ENCODE measurements at regions of chr9 and their contacts with region 1.

Region 1: DNA sequence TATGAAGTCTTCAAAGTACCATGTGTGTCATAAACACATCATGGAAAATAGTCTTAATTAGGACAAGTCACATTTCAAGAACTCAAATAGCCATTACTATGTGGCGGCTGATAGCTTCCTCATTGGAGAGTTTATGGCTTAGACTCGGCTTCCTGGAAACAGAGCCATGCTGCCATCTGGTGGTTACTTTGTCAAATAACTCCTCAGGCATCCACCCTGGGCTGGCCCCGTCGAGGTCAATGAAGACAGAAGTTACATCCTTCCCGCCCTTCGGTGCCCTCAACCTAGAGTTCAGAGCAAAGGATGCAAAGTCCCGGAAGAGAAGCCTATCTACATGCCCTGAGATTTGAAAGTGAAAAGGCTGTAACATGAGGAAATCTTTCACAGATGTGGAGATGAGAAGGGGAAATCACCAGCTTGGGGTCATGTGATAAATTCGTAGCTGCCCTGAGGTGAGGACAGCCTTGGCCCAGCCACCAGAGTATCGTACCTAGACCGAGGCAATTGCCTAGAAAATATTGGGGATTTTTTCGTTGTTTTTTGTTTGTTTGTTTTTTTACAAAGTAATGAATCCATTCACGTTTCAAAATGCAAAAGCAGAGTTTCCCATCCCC is 45.5 kb upstream of the ZNF169 start:
- DNase-seq: peak; percentile 84
- ATAC-seq: peak; percentile 97
- H3K4me3 Mint-ChIP-seq: peak overlapping the region; percentile 11
- H3K27ac Mint-ChIP-seq: no peak overlapping the region
- H3K4me1 Mint-ChIP-seq: peaks cover 4% of the 10 kb centered on the region
- H3K27me3 Mint-ChIP-seq: peaks cover 29% of the 10 kb centered on the region

Region 2: GRCh38 chr9:94014065-94014654 is 199.5 kb before region 1 on chr9:
- CTCF ChIA-PET with region 1: interaction called, 40 read pairs
- DNase-seq: no peak
- ATAC-seq: no peak
- H3K4me3 Mint-ChIP-seq: no peak overlapping the region
- H3K27ac Mint-ChIP-seq: no peak overlapping the region
- H3K4me1 Mint-ChIP-seq: no peaks in the 10 kb centered on the region
- H3K27me3 Mint-ChIP-seq: peaks cover 5% of the 10 kb centered on the region

Region 3: GRCh38 chr9:94065535-94065961 is 148.1 kb before region 1 on chr9:
- CTCF ChIA-PET with region 1: interaction called, 115 read pairs
- DNase-seq: peak; percentile 80
- ATAC-seq: peak; percentile 64
- H3K4me3 Mint-ChIP-seq: no peak overlapping the region
- H3K27ac Mint-ChIP-seq: no peak overlapping the region
- H3K4me1 Mint-ChIP-seq: peaks cover 4% of the 10 kb centered on the region
- H3K27me3 Mint-ChIP-seq: no peaks in the 10 kb centered on the region

Region 4: GRCh38 chr9:94188246-94188645 is 25.4 kb before region 1 on chr9:
- CTCF ChIA-PET with region 1: no interaction called
- DNase-seq: no peak
- ATAC-seq: no peak
- H3K4me3 Mint-ChIP-seq: no peak overlapping the region
- H3K27ac Mint-ChIP-seq: no peak overlapping the region
- H3K4me1 Mint-ChIP-seq: peaks cover 18% of the 10 kb centered on the region
- H3K27me3 Mint-ChIP-seq: no peaks in the 10 kb centered on the region

Region 5: DNA sequence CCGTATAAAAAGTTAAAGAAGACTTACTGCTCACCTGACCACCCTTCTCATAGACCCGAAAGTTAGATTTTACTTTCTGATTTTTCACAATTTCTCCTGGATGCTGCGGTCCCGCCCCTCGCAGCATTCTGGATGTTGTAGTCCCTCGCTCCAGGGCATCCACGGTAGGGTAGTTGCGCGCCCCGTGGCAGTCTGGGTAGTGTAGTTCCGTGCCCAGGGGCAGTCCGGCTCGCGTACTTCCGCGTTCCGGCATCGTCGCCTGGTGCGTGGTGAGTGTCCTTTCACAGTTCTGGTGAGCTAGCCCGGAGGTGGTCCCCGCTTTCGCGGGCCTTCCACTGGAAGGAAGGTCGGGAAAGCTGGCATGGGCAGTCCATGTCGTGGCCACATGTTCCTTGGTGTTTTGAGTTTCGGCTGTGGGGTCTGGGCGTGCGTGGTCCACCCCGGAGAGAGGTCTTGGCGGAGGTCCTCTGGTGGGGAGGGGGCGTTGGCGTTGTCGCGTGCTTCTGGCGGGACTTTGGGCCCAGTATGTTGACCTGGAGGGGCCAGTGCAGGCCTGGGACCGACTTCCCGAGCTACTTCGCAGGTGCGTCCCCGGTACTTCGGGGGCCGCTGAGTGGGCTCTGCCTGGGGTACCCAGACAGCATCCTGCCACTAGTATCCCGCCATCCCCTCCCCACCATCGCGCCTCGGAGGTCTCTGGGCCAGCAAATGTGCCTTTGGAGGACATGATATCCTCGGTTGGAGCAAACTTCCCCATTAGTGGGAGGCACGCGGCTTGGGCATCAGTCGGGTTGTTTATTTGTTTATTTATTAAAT is 45.7 kb after region 1 on chr9 and contains the start of gene ZNF169:
- CTCF ChIA-PET with region 1: no interaction called
- DNase-seq: peak; percentile 95
- ATAC-seq: peak; percentile 100
- H3K4me3 Mint-ChIP-seq: peak within 1 kb of the TSS; percentile 100
- H3K27ac Mint-ChIP-seq: peak within 1 kb of the TSS; percentile 96
- H3K4me1 Mint-ChIP-seq: peaks cover 26% of the 10 kb centered on the region
- H3K27me3 Mint-ChIP-seq: peaks cover 21% of the 10 kb centered on the region
- total RNA-seq, gene ZNF169: 7.7 to 8.9 TPM

Region 6: GRCh38 chr9:94289691-94290090 is 76.1 kb after region 1 on chr9:
- CTCF ChIA-PET with region 1: no interaction called
- DNase-seq: no peak
- ATAC-seq: no peak
- H3K4me3 Mint-ChIP-seq: no peak overlapping the region
- H3K27ac Mint-ChIP-seq: no peak overlapping the region
- H3K4me1 Mint-ChIP-seq: no peaks in the 10 kb centered on the region
- H3K27me3 Mint-ChIP-seq: no peaks in the 10 kb centered on the region